ENCODE measurements at regions of chr6 and their contacts with region 1.

Region 1: GRCh38 chr6:42879372-42880239 is at the start of gene RPL7L1:
- DNase-seq: peak; percentile 94
- total RNA-seq, gene RPL7L1: 52.9 to 63.0 TPM

Region 2: DNA sequence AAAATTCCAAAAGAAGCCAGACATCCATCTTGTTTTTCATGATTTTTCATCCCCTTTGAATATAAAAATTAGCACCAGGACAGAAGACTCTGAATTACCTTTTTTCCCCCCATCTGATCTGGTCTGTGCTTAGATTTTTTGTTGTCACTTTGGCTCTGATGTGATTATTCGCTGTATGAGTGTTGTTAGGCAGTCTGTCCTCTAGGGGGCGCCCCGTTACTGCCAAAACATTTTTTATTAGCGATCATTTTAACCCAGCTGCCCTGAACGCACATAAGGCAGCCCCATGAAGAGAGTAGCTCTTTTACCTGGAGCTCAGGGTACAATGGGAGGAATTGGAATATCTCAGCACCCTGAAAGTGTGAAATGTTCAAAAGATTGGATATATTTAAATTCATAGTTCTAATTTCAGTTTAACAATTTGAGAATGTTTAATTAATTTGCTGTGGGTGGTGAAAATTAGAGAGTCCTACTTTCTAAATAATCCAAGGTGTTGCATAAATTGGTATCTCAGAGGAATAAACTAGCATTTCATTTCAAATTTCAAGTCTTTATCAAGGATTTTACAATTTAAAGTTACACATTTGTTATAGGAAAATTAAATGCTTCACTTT is 218.0 kb before region 1 on chr6:
- intact Hi-C with region 1: loop called (anchors 2 to 5 kb)
- DNase-seq: peak; percentile 92

Region 3: DNA sequence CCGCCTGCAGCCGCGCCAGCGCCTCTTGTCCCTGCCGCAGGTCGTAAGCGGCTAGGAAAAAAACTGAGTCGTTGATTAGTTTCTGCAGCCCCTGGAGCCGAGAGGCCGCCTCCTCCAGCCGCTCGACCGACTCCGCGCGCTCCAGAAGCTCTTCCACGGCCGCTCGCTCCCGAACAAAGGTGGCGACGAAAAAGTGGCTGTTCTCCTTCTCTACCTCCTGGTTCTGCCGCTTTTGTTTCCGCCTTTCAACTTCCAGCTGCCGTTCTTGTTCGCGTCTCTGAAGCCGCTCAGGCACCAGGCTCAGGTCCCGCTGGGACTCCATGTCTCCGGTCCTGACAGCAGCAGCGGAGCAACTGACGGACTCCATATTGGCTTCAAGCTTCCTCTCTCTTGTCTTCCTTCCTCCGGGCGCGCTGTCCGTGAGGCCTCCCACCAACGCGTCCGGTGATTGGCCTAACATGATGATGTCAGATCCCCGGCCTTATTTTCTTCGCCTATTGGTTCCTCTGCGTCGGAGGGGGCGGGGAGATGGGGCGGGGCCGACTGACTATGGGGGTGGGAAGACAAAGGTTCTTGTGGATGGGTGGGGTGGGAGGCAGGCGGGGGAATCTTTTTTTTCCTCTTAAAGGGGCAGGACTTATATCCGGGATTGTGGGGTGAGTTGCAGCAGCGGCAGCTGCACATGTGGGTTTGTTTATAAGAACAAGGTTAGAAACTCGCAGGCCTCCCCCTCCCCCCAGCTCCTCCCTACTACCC is 133.7 kb before region 1 on chr6 and contains the start of gene TBCC:
- intact Hi-C with region 1: loop called in 1 of 2 experiments (anchors 5 kb)
- DNase-seq: peak; percentile 98
- total RNA-seq, gene TBCC: 13.9 to 16.2 TPM

Region 4: DNA sequence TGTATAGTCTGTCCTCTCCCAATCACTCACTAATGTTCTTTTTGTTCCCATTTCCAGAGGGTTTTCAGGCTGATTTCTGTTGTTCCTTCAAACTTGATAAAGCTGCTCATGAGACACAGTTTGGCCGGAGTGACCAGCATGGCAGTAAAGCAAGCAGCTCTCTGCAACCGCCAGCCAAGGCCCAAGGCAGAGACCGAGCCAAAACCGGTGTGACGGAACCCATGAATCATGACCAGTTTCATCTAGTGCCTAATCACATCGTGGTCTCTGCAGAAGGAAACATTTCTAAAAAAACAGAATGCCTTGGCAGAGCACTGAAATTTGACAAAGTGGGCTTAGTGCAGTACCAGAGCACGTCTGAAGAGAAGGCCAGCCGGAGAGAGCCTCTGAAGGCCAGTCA is 15.0 kb before region 1 on chr6:
- intact Hi-C with region 1: loop called in 1 of 2 experiments (anchors 1 kb)
- DNase-seq: peak; percentile 92